Astrocyte of the cerebellum (primary cell): ENCODE measurements at regions of chr19 and their contacts with region 1.

Region 1: GRCh38 chr19:8654591-8655339 is 24.3 kb downstream of the NFILZ start:
- DNase-seq: no peak
- H3K4me3 ChIP-seq: no peak overlapping the region
- CTCF ChIP-seq: peak; percentile 93

Region 2: DNA sequence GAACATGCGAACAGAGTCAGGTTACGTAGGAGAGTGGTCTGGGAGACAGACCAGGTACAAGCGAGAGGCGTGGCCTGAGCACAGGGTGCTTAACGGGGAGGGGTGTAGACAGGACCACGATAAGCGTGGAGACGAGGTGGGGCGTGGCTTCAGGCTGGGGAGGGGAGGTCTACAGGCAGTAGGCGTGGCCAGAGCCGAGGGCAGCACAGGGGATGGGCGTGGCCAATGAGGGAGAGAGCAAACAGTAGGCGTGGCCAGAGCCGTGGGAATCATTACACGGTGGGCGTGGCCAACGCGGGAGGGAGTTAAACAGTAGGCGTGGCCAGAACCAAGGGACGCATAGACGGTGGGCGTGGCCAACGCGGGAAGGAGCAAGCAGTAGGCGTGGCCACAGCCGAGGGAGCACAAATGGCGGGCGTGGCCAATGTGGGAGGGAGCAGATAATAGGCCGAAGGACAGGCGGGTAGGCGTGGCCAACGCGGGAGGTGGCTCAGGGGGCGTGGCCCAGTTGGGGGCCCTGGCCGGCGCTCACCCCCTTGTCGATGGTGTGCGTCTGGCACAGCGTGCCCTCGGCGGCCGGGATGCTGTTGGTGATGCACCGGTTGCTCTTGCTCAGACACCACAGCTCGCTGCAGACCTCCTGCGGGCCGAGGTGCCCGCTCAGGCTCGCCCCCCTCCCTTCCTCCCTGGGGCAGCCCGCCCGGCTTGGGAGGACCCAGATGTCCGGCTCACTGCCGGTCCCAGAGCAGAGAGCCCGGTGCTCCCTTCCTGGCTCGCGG is 62.3 kb before region 1 on chr19:
- in situ Hi-C with region 1: loop called (anchors 5 kb)
- DNase-seq: peak; percentile 94
- H3K4me3 ChIP-seq: peak overlapping the region; percentile 42
- CTCF ChIP-seq: no peak

Region 3: GRCh38 chr19:8697671-8698432 is 43.1 kb after region 1 on chr19:
- in situ Hi-C with region 1: no loop called
- DNase-seq: no peak
- H3K4me3 ChIP-seq: no peak overlapping the region
- CTCF ChIP-seq: no peak

Region 4: DNA sequence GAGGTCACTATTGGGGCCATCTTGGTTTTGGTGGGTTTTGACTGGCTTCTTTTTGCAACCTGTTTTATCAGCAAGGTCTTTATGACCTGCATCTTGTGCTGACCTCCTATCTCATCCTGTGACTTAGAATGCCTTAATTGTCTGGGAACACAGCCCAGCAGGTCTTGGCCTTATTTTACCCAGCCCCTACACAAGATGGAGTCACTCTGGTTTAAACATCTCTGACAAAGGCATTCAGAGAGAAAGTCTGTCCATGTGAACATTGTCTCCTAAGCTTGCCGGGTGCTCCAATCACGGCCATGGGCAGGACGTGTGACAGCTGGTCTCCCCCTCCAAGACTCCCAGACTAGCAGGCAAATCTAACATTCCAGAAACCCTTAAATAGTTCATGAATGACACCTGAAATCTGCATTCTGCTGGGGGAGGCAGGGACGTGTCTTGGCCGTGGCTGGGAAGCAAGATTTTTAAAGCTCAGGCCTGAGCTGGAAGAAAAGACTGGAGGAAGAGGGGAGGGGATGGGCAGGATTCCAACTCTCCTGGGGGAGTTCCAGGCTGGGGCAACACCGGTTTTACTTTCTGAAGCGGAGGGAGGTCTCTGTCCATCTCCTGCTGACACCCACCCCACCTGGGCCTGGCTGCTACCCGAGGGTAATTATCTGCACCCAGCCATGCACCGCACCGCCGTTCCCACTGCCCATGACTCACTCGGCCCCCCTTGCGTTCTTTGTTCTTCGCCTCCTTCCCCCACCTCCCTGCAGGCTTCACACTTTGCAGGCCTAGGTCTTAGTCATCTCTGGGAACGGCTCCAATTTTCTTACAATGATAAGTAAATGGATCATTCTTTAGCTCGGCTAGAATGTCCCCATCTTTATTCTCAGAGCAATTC is 420.5 kb after region 1 on chr19:
- in situ Hi-C with region 1: loop called (anchors 25 kb)
- DNase-seq: peak; percentile 99
- H3K4me3 ChIP-seq: no peak overlapping the region
- CTCF ChIP-seq: no peak